B cell (primary cell): ENCODE measurements at regions of chr16 and their contacts with region 1.

Region 1: GRCh38 chr16:56964243-56965148 is 2.7 kb downstream of the CETP start:
- DNase-seq: peak; percentile 94
- ATAC-seq: peak; percentile 92
- H3K4me3 ChIP-seq: no peak overlapping the region
- H3K4me3 Mint-ChIP-seq: no peak overlapping the region
- H3K27ac ChIP-seq: peak overlapping the region; percentile 4 to 20
- H3K27ac Mint-ChIP-seq: peak overlapping the region; percentile 83
- H3K4me1 ChIP-seq: peaks cover 17 to 22% of the 10 kb centered on the region in 2 donors
- H3K4me1 Mint-ChIP-seq: peaks cover 23% of the 10 kb centered on the region
- H3K27me3 ChIP-seq: no peaks in the 10 kb centered on the region
- H3K27me3 Mint-ChIP-seq: no peaks in the 10 kb centered on the region
- CTCF ChIP-seq: peak; percentile 99

Region 2: DNA sequence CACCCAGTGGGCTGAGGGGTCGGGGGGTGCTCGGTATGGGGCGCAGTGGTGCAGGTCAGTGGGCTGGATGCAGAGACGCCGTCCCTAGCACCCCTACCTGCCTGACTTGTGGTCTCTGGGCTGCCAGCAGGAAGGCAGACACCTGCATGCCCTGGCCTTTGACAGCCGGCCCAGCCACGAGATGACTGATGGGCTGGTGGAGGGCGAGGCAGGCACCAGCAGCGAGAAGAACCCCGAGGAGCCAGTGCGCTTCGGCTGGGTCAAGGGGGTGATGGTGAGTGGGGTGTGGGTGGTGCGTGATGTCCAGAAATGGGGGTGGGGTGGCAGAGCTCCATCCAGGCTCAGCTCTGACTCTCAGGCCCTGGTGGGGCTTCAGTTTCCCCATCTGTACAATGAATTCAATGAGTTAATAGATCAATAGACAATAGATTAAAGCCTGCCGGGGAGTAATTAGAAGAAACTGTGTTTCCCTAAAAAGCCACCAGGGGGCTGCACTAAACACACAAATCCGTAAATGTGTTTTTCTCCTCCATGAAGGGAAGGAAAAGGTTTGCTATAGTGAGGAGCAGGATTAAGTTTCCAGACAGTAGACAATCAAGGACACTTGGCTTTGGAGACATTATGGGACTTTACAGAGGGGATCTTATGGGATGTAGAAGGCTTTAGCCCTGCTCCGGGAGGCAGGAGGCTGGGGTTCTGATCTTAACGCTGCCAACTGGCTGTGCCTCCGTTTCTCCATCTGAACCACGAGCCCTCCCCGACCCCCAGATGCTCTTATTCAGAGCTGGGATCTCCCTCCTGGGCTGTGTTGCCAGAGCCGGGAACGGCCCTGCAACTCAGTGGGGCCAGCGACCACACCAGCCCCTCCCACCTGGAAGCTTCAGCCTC is 97.3 kb before region 1 on chr16:
- CTCF ChIA-PET with region 1: interaction called, 26 read pairs
- POLR2A ChIA-PET with region 1: no interaction called
- intact Hi-C with region 1: no loop called
- DNase-seq: peak; percentile 81
- ATAC-seq: no peak
- H3K4me3 ChIP-seq: no peak overlapping the region
- H3K4me3 Mint-ChIP-seq: peak overlapping the region; percentile 55
- H3K27ac ChIP-seq: no peak overlapping the region
- H3K27ac Mint-ChIP-seq: peak overlapping the region; percentile 69
- H3K4me1 ChIP-seq: peaks cover 21 to 59% of the 10 kb centered on the region in 2 donors
- H3K4me1 Mint-ChIP-seq: peaks cover 37% of the 10 kb centered on the region
- H3K27me3 ChIP-seq: no peaks in the 10 kb centered on the region
- H3K27me3 Mint-ChIP-seq: no peaks in the 10 kb centered on the region
- CTCF ChIP-seq: peak; percentile 89

Region 3: DNA sequence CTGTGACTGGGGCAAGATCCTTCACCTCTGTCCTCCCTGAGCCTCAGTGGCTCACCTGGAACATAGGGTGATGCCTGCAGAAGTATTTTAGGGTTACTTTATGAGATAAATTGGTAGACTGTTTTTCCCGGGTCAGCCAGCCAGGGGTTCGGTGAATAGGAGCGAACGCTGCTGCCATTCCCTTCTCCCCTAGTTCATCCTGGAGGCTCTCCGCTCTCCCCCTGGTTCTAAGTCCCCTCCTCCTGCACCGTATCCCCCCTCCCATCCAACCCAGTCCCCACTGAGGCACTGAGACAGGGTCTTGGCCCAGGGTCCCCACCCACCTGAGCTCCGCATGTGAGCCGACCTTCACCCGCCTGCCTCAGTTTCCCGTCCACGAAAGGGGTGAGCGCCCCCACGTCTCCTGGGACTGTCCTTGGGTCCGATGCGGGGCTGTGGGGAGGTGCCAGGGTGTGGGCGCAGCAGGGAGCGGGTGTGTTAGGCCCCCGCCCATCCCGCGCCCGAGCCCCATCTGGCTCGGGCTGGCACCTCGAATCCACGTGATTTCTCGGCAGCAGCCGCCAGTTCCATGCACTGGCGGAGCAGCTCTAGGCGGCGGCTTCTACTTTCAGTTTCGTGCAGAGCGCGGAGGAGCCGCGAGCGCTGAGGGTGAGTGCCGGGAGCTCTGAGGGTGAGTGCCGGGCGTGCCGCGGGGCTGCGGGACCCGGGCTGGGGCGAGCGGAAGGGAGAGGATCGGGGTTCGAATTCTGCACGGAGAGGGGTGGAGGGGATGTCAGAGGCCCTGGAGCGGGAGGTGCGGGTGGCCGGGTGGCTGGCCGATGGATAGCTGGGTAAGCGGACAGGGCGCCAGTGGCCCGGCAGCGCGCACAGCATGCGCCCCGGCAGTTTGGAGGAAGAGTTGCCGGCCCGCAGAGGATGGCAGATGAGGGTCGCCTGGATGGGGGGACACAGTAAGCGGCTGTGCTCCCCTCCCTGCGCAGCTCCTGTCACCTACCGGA is 24.8 kb after region 1 on chr16 and contains the start of gene NLRC5:
- CTCF ChIA-PET with region 1: interaction called, 124 read pairs
- POLR2A ChIA-PET with region 1: interaction called, 9 read pairs
- intact Hi-C with region 1: loop called (anchors 1 kb)
- DNase-seq: peak; percentile 93
- ATAC-seq: peak; percentile 89
- H3K4me3 ChIP-seq: peak within 1 kb of the TSS; percentile 69 to 97 (median 89)
- H3K4me3 Mint-ChIP-seq: peak within 1 kb of the TSS; percentile 100
- H3K27ac ChIP-seq: peak within 1 kb of the TSS; percentile 83 to 86
- H3K27ac Mint-ChIP-seq: peak within 1 kb of the TSS; percentile 99
- H3K4me1 ChIP-seq: peaks cover 75 to 81% of the 10 kb centered on the region in 2 donors
- H3K4me1 Mint-ChIP-seq: peaks cover 86% of the 10 kb centered on the region
- H3K27me3 ChIP-seq: no peaks in the 10 kb centered on the region
- H3K27me3 Mint-ChIP-seq: no peaks in the 10 kb centered on the region
- CTCF ChIP-seq: no peak
- total RNA-seq, gene NLRC5: 510 and 531 TPM in 2 replicates

Region 4: GRCh38 chr16:57013229-57013628 is 48.7 kb after region 1 on chr16:
- CTCF ChIA-PET with region 1: interaction called, 49 read pairs
- POLR2A ChIA-PET with region 1: no interaction called
- intact Hi-C with region 1: loop called (anchors 2 kb)
- DNase-seq: no peak
- ATAC-seq: no peak
- H3K4me3 ChIP-seq: no peak overlapping the region
- H3K4me3 Mint-ChIP-seq: peak overlapping the region; percentile 66
- H3K27ac ChIP-seq: peak overlapping the region in 1 of 2 donors; percentile 75
- H3K27ac Mint-ChIP-seq: peak overlapping the region; percentile 41
- H3K4me1 ChIP-seq: peaks cover 36 to 45% of the 10 kb centered on the region in 2 donors
- H3K4me1 Mint-ChIP-seq: peaks cover 47% of the 10 kb centered on the region
- H3K27me3 ChIP-seq: no peaks in the 10 kb centered on the region
- H3K27me3 Mint-ChIP-seq: no peaks in the 10 kb centered on the region
- CTCF ChIP-seq: no peak

Region 5: GRCh38 chr16:57045694-57046381 is 81.3 kb after region 1 on chr16:
- CTCF ChIA-PET with region 1: interaction called, 213 read pairs
- POLR2A ChIA-PET with region 1: interaction called, 24 read pairs
- intact Hi-C with region 1: loop called (anchors 1 kb)
- DNase-seq: peak; percentile 84
- ATAC-seq: peak; percentile 48
- H3K4me3 ChIP-seq: peak overlapping the region in 2 of 5 experiments; percentile 25 to 38
- H3K4me3 Mint-ChIP-seq: peak overlapping the region; percentile 78
- H3K27ac ChIP-seq: peak overlapping the region; percentile 65 to 72
- H3K27ac Mint-ChIP-seq: peak overlapping the region; percentile 98
- H3K4me1 ChIP-seq: peaks cover 51 to 69% of the 10 kb centered on the region in 2 donors
- H3K4me1 Mint-ChIP-seq: peaks cover 68% of the 10 kb centered on the region
- H3K27me3 ChIP-seq: no peaks in the 10 kb centered on the region
- H3K27me3 Mint-ChIP-seq: no peaks in the 10 kb centered on the region
- CTCF ChIP-seq: peak; percentile 67

Region 6: DNA sequence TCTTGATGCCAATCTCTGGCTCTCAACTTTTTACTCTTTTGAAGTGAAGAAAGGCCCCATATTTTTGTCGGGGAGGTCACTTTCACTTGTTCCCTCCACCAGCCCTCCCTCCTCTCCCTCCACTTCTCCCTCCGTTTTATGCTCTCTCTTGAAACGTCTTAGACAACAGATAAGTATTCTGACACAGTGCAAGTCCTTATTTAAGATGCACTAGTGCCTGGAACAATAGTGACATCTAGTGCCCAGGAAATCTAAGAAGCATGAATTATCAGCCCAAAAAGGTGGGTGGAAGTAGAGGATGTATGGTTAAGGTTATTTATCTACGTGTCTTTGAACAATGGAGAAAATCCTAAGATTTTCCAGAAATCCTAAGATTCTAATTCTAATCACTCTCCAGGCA is 203.5 kb after region 1 on chr16:
- CTCF ChIA-PET with region 1: interaction called, 4 read pairs
- POLR2A ChIA-PET with region 1: no interaction called
- intact Hi-C with region 1: loop called (anchors 1 kb)
- DNase-seq: peak; percentile 73
- ATAC-seq: peak; percentile 60
- H3K4me3 ChIP-seq: no peak overlapping the region
- H3K4me3 Mint-ChIP-seq: no peak overlapping the region
- H3K27ac ChIP-seq: no peak overlapping the region
- H3K27ac Mint-ChIP-seq: no peak overlapping the region
- H3K4me1 ChIP-seq: no peaks in the 10 kb centered on the region
- H3K4me1 Mint-ChIP-seq: peaks cover 8% of the 10 kb centered on the region
- H3K27me3 ChIP-seq: no peaks in the 10 kb centered on the region
- H3K27me3 Mint-ChIP-seq: no peaks in the 10 kb centered on the region
- CTCF ChIP-seq: peak; percentile 73

Region 7: GRCh38 chr16:57372372-57373116 is 408.0 kb after region 1 on chr16 and contains the start of gene CX3CL1:
- CTCF ChIA-PET with region 1: no interaction called
- POLR2A ChIA-PET with region 1: no interaction called
- intact Hi-C with region 1: no loop called
- DNase-seq: no peak
- ATAC-seq: no peak
- H3K4me3 ChIP-seq: no peak within 1 kb of the TSS
- H3K4me3 Mint-ChIP-seq: no peak within 1 kb of the TSS
- H3K27ac ChIP-seq: no peak within 1 kb of the TSS
- H3K27ac Mint-ChIP-seq: no peak within 1 kb of the TSS
- H3K4me1 ChIP-seq: peaks cover 4 to 6% of the 10 kb centered on the region in 2 donors
- H3K4me1 Mint-ChIP-seq: peaks cover 9% of the 10 kb centered on the region
- H3K27me3 ChIP-seq: peaks cover 0 to 7% (median 1%) of the 10 kb centered on the region in 4 experiments
- H3K27me3 Mint-ChIP-seq: peaks cover 3% of the 10 kb centered on the region
- CTCF ChIP-seq: no peak
- total RNA-seq, gene CX3CL1: not detected in 2 replicates